ENCODE measurements at regions of chr14 and their contacts with region 1.

Region 1: DNA sequence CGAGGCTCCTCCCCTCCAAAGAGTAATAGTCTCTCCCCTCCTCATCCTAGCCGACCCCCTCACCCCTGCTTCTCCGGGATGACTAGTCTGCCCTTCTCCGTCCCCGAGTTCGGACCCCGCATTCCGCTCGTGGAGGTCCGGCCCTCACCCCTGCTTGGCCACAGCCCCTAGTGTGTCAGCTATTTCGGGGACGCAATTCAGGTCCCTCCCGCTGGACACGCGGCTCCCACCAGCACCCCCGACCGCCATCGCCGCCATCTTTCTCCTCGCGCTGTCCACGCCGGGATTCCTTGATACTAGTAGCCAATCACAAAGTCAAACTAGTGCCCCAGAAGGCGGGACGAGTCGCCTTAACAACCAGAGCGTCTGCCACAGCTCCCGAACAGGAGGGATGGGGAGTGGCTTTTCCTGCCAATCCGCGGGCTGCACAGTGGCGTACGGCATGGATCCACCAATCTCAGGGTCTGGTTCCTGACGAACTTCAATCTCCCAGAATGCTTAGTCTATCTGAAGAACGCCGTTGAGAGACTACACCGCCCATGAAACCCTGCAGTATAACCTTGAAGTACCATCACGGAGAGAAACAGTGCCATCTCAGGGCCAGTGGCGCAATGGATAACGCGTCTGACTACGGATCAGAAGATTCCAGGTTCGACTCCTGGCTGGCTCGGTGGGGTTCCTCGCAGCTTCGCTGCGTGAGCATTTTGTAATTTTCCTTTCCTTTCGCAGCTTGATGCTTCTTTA is at the start of gene PRMT5:
- DNase-seq: peak; percentile 100
- ATAC-seq: peak; percentile 97
- H3K4me3 ChIP-seq: peak within 1 kb of the TSS; percentile 91
- H3K27ac ChIP-seq: peak within 1 kb of the TSS; percentile 81
- H3K4me1 ChIP-seq: peaks cover 16% of the 10 kb centered on the region; the same call in 1 of the 2 replicates
- H3K27me3 ChIP-seq: no peaks in the 10 kb centered on the region
- CTCF ChIP-seq: peak in 1 of 3 experiments; percentile 7; a peak in 1 of 6 replicates
- EP300 ChIP-seq: no peak
- POLR2A ChIP-seq: peak; percentile 97
- RAD21 ChIP-seq: no peak
- polyA plus RNA-seq, gene PRMT5: 54.3 to 71.6 TPM

Region 2: DNA sequence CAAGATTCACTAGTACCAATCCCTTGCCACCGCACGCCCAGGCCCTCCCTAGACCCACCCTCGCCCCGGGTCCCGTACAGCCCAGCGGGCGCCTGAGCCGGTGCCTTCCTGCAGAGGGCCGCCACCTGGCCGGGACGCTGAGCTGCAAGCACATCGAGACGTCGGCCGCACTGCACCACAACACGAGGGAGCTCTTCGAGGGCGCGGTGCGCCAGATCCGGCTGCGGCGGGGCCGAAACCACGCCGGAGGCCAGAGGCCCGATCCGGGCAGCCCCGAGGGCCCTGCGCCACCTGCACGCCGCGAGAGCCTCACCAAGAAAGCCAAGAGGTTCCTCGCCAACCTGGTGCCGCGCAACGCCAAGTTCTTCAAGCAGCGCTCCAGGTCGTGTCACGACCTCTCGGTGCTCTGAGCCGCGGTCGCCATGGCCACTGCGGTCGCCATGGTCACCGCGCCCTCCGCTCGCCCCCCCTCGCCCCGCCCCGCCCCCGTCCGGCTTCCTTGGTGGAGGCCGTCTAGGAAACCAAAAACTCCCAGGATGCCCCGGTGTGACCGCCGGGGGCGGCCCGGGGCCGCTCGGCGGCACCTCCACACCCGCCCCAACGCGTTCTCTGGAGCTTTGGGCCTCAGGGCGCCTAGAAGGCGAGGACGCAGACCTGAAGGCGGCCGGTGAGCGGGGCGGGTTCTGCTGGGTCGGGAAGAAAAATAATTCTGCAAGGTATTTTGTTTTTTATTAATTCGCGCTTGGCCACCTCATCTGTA is 42.6 kb before region 1 on chr14:
- CTCF ChIA-PET with region 1: interaction called, 15 read pairs
- POLR2A ChIA-PET with region 1: interaction called, 5 read pairs
- RAD21 ChIA-PET with region 1: interaction called, 9 read pairs
- SMC1A ChIA-PET with region 1: interaction called, 4 read pairs
- in situ Hi-C with region 1: no loop called
- intact Hi-C with region 1: no loop called
- DNase-seq: peak; percentile 45
- ATAC-seq: peak; percentile 72
- H3K4me3 ChIP-seq: peak overlapping the region; percentile 91
- H3K27ac ChIP-seq: peak overlapping the region; percentile 86
- H3K4me1 ChIP-seq: peaks cover 35% of the 10 kb centered on the region
- H3K27me3 ChIP-seq: no peaks in the 10 kb centered on the region
- CTCF ChIP-seq: peak; percentile 13 to 46 (median 18); a peak in 4 of 6 replicates
- EP300 ChIP-seq: no peak; a peak in 1 of 4 replicates
- POLR2A ChIP-seq: peak; percentile 79; the same call in 1 of the 2 replicates
- RAD21 ChIP-seq: no peak

Region 3: DNA sequence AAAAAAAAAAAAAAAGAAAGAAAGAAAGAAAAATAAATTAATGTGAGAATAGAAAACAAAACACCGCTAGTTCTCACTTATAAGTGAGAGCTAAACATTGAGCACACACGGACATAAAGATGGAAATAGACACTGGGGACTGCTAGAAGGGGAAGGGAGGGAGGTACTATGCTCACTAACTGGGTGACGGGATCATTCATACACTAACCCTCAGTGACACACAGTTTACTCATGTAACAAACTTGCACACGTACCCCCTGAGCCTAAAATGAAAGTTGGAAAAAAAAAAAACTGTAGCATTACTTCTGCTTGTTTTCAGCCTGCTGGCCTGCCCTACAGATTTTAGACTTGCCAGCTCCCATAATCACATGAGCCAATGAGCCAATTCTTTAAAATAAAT is 10.4 kb after region 1 on chr14:
- CTCF ChIA-PET with region 1: interaction called, 31 read pairs
- POLR2A ChIA-PET with region 1: interaction called, 4 read pairs
- RAD21 ChIA-PET with region 1: no interaction called
- SMC1A ChIA-PET with region 1: interaction called, 3 read pairs
- in situ Hi-C with region 1: no loop called
- intact Hi-C with region 1: no loop called
- DNase-seq: no peak
- ATAC-seq: no peak
- H3K4me3 ChIP-seq: no peak overlapping the region
- H3K27ac ChIP-seq: no peak overlapping the region
- H3K4me1 ChIP-seq: no peaks in the 10 kb centered on the region
- H3K27me3 ChIP-seq: no peaks in the 10 kb centered on the region
- CTCF ChIP-seq: no peak
- EP300 ChIP-seq: no peak
- POLR2A ChIP-seq: no peak
- RAD21 ChIP-seq: no peak

Region 4: DNA sequence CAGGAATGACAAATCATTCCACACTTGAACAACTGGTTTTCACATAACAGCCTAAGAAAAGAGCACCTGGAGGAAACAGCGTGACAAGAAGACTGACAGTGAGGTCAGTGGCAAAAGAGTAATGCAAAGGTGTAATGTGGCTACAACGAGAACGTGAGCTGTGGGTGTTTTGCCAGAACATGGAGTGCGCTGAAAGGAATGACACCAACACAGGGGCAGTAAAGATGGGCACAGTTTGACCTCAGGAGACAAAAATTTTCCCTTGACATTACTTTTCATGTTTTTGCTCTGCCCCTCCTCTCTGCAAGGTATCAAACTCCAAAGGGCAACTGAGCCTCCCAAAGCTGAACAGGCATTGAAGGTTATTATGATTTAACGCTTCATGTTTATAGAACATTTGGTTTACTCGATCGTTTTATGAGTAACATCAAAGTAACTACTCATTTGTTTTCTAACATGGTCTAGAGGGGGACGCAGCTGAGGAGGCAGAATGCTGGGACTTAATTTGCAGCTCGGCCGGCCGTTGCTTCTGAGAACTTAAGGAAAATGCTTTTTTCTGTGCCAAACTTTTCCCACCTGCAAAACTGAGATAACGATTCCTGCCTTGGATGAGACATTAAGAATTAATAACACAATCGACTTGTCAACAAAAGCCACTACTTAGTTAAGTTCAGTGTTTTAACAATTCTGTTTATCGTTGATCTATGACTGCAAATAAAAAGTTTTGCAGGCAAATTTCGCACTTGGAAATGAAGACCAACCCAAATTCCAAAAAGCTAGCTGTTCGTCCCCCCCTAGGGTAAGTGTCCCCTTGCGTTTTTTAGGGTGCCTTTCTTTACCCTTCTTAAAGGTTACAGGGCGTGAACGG is 26.7 kb after region 1 on chr14:
- CTCF ChIA-PET with region 1: interaction called, 54 read pairs
- POLR2A ChIA-PET with region 1: interaction called, 8 read pairs
- RAD21 ChIA-PET with region 1: interaction called, 14 read pairs
- SMC1A ChIA-PET with region 1: interaction called, 24 read pairs
- in situ Hi-C with region 1: no loop called
- intact Hi-C with region 1: no loop called
- DNase-seq: no peak
- ATAC-seq: no peak
- H3K4me3 ChIP-seq: peak overlapping the region; percentile 85
- H3K27ac ChIP-seq: peak overlapping the region; percentile 90
- H3K4me1 ChIP-seq: no peaks in the 10 kb centered on the region
- H3K27me3 ChIP-seq: no peaks in the 10 kb centered on the region
- CTCF ChIP-seq: no peak
- EP300 ChIP-seq: no peak
- POLR2A ChIP-seq: no peak
- RAD21 ChIP-seq: no peak

Region 5: GRCh38 chr14:22994762-22995275 is 65.5 kb after region 1 on chr14:
- CTCF ChIA-PET with region 1: interaction called, 22 read pairs
- POLR2A ChIA-PET with region 1: no interaction called
- RAD21 ChIA-PET with region 1: interaction called, 3 read pairs
- SMC1A ChIA-PET with region 1: no interaction called
- in situ Hi-C with region 1: no loop called
- intact Hi-C with region 1: no loop called
- DNase-seq: no peak
- ATAC-seq: peak; percentile 94
- H3K4me3 ChIP-seq: no peak overlapping the region
- H3K27ac ChIP-seq: no peak overlapping the region
- H3K4me1 ChIP-seq: no peaks in the 10 kb centered on the region
- H3K27me3 ChIP-seq: no peaks in the 10 kb centered on the region
- CTCF ChIP-seq: peak; percentile 65 to 75 (median 67)
- EP300 ChIP-seq: no peak
- POLR2A ChIP-seq: no peak
- RAD21 ChIP-seq: peak; percentile 64

Region 6: GRCh38 chr14:23057757-23058653 is 128.7 kb after region 1 on chr14:
- CTCF ChIA-PET with region 1: interaction called, 18 read pairs
- POLR2A ChIA-PET with region 1: no interaction called
- RAD21 ChIA-PET with region 1: interaction called, 5 read pairs
- SMC1A ChIA-PET with region 1: interaction called, 3 read pairs
- in situ Hi-C with region 1: no loop called
- intact Hi-C with region 1: loop called (anchors 2 kb)
- DNase-seq: peak; percentile 40
- ATAC-seq: peak; percentile 82
- H3K4me3 ChIP-seq: peak overlapping the region; percentile 79
- H3K27ac ChIP-seq: no peak overlapping the region
- H3K4me1 ChIP-seq: peaks cover 12% of the 10 kb centered on the region
- H3K27me3 ChIP-seq: no peaks in the 10 kb centered on the region
- CTCF ChIP-seq: peak; percentile 92 to 97 (median 96); a peak in 5 of 6 replicates
- EP300 ChIP-seq: no peak
- POLR2A ChIP-seq: peak; percentile 74
- RAD21 ChIP-seq: peak; percentile 78

Region 7: DNA sequence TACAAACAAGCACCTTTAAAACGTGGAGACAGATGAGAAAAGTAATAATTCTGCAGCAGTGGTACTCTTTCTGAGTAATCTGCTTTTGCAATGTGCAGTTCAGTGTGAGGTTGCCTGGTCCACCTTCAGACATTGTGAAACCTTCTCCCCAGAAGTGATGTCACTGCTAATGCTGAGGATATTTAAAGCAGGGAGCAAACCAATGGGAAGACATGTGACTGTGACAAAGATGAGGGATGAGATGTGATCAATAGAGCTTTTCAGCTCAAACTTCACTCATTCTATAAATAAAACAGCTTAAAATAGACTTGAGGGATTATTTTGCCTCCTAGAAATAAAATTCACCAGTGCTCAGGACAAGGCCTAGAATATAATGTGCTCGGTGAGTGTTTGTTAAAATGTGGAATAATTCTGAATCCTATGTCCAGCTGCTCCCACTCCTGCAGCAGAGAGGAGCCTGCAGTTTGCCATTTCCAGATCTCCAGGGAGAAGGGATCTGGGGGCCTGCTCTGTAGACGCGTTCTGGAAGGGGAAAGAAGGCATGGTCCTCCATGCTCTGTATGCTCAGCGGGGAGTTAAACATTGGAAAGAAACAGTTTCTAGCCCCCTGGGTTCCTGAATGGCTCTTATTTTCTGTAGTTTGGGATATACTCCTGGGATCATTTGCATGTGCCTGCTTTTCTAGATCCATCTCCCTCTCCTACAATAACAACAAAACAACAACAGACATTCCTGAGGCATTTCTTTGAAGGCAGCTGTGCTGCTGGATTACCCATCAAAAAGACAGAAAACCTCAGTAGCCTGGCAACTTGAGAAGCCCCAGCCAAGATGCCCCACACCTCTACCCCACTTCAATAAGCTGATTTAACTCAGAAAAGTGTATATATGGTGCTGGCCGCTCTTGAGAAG is 245.3 kb after region 1 on chr14:
- CTCF ChIA-PET with region 1: no interaction called
- POLR2A ChIA-PET with region 1: no interaction called
- RAD21 ChIA-PET with region 1: no interaction called
- SMC1A ChIA-PET with region 1: no interaction called
- in situ Hi-C with region 1: no loop called
- intact Hi-C with region 1: no loop called
- DNase-seq: no peak
- ATAC-seq: no peak
- H3K4me3 ChIP-seq: no peak overlapping the region
- H3K27ac ChIP-seq: no peak overlapping the region
- H3K4me1 ChIP-seq: no peaks in the 10 kb centered on the region
- H3K27me3 ChIP-seq: no peaks in the 10 kb centered on the region; a peak in 1 of 4 replicates
- CTCF ChIP-seq: no peak
- EP300 ChIP-seq: no peak
- POLR2A ChIP-seq: no peak
- RAD21 ChIP-seq: no peak